BJ (cell line): ENCODE measurements at regions of chrX and their contacts with region 1.

Region 1: GRCh38 chrX:118847676-118848075 is 24.1 kb downstream of the ZCCHC12 start:
- DNase-seq: no peak
- H3K4me3 ChIP-seq: no peak overlapping the region
- H3K27me3 ChIP-seq: no peaks in the 10 kb centered on the region
- CTCF ChIP-seq: peak; percentile 59

Region 2: DNA sequence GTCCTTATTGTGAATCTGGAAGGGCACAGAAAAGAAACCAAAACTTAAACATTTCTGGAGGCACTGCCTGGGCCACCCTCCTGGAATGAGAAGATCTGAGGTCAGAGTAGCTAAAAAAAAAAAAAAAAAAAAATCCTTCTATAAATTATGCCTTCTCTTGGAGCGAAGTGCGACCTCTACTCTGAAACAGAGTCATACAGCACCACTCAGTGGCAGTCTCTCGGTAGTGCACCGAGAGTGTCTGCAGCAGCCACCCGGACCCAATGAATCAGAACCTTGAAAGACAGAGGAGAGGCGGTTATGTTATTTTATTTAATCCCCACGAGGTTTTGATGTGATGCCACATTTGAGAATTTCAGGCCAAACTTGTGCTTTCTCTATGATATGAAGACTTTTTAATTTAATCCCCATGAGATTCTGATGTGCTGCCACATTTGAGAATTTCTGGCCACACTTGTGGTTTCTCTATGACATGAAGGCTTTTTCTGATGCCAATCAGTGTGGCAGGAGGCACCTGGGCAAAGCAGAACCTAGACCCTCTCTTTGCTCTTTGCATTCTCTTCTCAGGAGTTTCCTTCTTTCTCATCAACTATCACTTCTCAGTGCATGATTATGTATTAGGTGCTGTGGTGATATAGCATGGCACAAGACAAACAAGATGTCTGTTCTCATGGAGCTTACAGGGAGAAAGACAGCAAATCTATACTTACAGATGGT is 219.5 kb after region 1 on chrX:
- CTCF ChIA-PET with region 1: interaction called, 13 read pairs
- POLR2A ChIA-PET with region 1: no interaction called
- DNase-seq: no peak
- H3K4me3 ChIP-seq: no peak overlapping the region
- H3K27me3 ChIP-seq: no peaks in the 10 kb centered on the region; the same call in 1 of the 2 replicates
- CTCF ChIP-seq: peak; percentile 67